Sigmoid colon (tissue), 7 donors: ENCODE measurements at regions of chr2 and their contacts with region 1.

Region 1: GRCh38 chr2:212147921-212148513 is 390.6 kb downstream of the ERBB4 start:
- DNase-seq: no peak
- H3K4me3 ChIP-seq: no peak overlapping the region
- H3K27ac ChIP-seq: no peak overlapping the region
- H3K4me1 ChIP-seq: no peaks in the 10 kb centered on the region
- H3K27me3 ChIP-seq: no peaks in the 10 kb centered on the region
- CTCF ChIP-seq: peak in 1 of 4 experiments; percentile 20
- EP300 ChIP-seq: no peak
- POLR2A ChIP-seq: no peak

Region 2: GRCh38 chr2:212421556-212422334 is 273.7 kb after region 1 on chr2:
- intact Hi-C with region 1: no loop called
- DNase-seq: no peak
- H3K4me3 ChIP-seq: no peak overlapping the region
- H3K27ac ChIP-seq: no peak overlapping the region
- H3K4me1 ChIP-seq: no peaks in the 10 kb centered on the region
- H3K27me3 ChIP-seq: no peaks in the 10 kb centered on the region
- CTCF ChIP-seq: no peak
- EP300 ChIP-seq: no peak
- POLR2A ChIP-seq: no peak

Region 3: GRCh38 chr2:212548450-212548819 is 400.4 kb after region 1 on chr2:
- intact Hi-C with region 1: loop called (anchors 10 kb)
- DNase-seq: no peak
- H3K4me3 ChIP-seq: no peak overlapping the region
- H3K27ac ChIP-seq: no peak overlapping the region
- H3K4me1 ChIP-seq: no peaks in the 10 kb centered on the region
- H3K27me3 ChIP-seq: no peaks in the 10 kb centered on the region
- CTCF ChIP-seq: peak in 2 of 4 experiments; percentile 19 to 28
- EP300 ChIP-seq: no peak
- POLR2A ChIP-seq: no peak